ENCODE measurements at regions of chr12 and their contacts with region 1.

Region 1: DNA sequence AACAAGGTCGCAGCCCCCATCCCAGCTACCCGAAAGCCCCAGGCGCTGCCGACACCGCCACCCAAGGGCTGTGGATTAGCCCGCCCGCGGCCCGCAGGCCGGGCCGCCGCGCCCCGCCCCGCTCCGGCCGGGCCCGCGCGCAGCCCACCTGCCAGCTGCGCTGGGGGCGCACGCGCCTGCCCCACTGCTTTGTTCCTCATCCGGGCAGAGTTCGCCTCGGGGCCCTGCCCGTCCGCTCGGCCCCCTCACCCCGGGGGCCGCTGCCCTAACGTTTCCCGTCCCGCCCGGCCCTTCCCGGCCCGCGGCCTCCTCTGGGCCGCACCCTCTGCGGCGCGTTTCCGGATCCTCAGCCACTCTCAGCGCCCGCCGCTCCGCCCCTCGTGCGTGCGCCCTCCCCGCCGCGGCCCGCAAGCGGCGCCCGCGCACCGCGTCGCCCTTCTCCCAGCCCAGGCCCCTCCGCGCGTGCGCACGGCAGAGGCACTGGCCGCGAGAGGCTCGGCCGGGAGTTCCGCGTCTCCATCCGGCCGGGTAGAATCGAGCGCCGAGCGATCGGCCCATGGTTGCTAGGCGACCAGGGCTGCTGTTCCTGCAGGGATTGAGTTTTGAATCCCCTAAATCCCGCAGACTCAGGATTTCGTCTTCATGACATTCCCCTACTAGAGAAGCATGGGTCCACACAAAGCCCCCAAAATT is at the start of gene PRDM4:
- DNase-seq: peak; percentile 94 to 98 (median 97)
- ATAC-seq: peak; percentile 96
- H3K4me3 ChIP-seq: peak within 1 kb of the TSS; percentile 82
- H3K27ac ChIP-seq: peak within 1 kb of the TSS; percentile 52
- H3K4me1 ChIP-seq: peaks cover 9 to 13% of the 10 kb centered on the region in 2 experiments; a peak in 4 of 5 replicates
- H3K27me3 ChIP-seq: 0 out of 5 replicates have a peak, but pooled peaks cover 0 to 3% of the 10 kb centered on the region in 2 experiments
- CTCF ChIP-seq: peak in 2 of 3 experiments; percentile 64 to 79; a peak in 5 of 6 replicates
- EP300 ChIP-seq: no peak
- POLR2A ChIP-seq: peak; percentile 70
- RAD21 ChIP-seq: peak; percentile 77 to 87
- polyA plus RNA-seq, gene PRDM4: 5.9 to 6.6 TPM

Region 2: GRCh38 chr12:107685360-107686248 is 75.4 kb before region 1 on chr12 and contains the start of gene PWP1:
- CTCF ChIA-PET with region 1: no interaction called
- POLR2A ChIA-PET with region 1: interaction called, 3 read pairs
- in situ Hi-C with region 1: no loop called
- intact Hi-C with region 1: loop called (anchors 5 kb)
- DNase-seq: peak; percentile 96 to 97 (median 97)
- ATAC-seq: peak; percentile 96
- H3K4me3 ChIP-seq: peak within 1 kb of the TSS; percentile 95
- H3K27ac ChIP-seq: peak within 1 kb of the TSS; percentile 84
- H3K4me1 ChIP-seq: peaks cover 7 to 11% of the 10 kb centered on the region in 2 experiments; a peak in 4 of 5 replicates
- H3K27me3 ChIP-seq: no peaks in the 10 kb centered on the region
- CTCF ChIP-seq: no peak
- EP300 ChIP-seq: no peak
- POLR2A ChIP-seq: peak; percentile 89
- RAD21 ChIP-seq: no peak
- polyA plus RNA-seq, gene PWP1: 267 to 401 TPM

Region 3: DNA sequence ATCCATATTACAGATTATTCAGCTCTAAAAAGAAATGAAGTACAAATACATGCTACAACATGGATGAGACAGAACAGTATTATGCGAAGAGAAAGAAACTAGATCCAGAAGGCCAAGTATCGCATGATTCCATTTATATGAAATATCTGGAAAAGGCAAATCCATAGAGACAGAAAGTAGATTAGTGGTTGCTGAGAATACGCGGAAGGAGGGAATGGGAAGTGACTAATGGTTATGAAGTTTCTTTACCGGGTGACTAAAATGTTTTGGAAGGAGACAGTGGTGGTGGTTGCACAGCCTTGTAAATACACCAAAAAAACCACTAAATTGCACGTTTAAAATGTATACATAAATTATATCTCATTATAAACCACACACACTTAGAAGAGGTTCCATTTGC is 12.5 kb before region 1 on chr12:
- CTCF ChIA-PET with region 1: no interaction called
- POLR2A ChIA-PET with region 1: interaction called, 10 read pairs
- in situ Hi-C with region 1: no loop called
- intact Hi-C with region 1: no loop called
- DNase-seq: no peak
- ATAC-seq: no peak
- H3K4me3 ChIP-seq: no peak overlapping the region
- H3K27ac ChIP-seq: no peak overlapping the region
- H3K4me1 ChIP-seq: no peaks in the 10 kb centered on the region
- H3K27me3 ChIP-seq: no peaks in the 10 kb centered on the region
- CTCF ChIP-seq: no peak
- EP300 ChIP-seq: no peak
- POLR2A ChIP-seq: no peak
- RAD21 ChIP-seq: no peak

Measured in K562 (cell line).